Posterior vena cava (tissue), 2 donors: ENCODE measurements at regions of chr2 and their contacts with region 1.

Region 1: GRCh38 chr2:9317559-9317958 is 105.8 kb downstream of the ITGB1BP1 start:
- DNase-seq: no peak

Region 2: DNA sequence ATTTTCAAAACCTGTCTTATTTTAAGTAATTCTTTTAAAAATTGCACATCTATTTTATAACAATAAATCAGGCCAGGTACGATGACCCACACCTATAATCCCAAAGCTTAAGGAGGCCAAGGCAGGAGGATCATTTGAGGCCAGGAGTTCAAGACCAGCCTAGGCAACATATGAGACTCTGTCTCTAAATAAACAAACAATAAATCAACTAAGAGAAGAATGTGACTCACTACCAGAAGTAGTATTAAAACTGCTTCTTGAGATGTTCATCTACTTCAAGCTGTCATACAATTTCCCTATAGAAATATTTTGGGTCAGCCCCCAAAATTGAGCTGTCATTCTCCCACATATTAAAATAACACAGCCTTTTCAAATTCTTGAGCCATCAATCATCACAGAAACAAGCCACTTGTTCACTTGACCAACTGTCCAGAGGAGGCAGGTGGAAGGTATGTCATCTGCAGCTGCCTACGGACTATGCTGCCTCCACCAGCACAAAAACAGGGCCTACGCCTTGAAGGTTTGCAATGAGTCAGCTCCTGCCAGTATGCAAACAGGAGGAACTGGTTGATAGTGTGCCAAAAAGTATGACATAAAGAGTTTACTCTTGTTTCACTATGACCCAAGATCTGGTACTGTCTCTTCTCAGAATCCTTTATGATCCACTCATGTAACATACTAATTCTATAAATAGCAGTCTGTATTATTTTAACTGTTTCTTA is 513.7 kb before region 1 on chr2:
- intact Hi-C with region 1: no loop called
- DNase-seq: no peak

Region 3: GRCh38 chr2:9300829-9301453 is 16.6 kb before region 1 on chr2:
- intact Hi-C with region 1: loop called in 1 of 2 experiments (anchors 2 kb)
- DNase-seq: no peak